ENCODE measurements at regions of chr3 and their contacts with region 1.

Region 1: GRCh38 chr3:124281453-124282316 is 289.8 kb upstream of the ROPN1 start:
- DNase-seq: no peak

Region 2: GRCh38 chr3:124078953-124079911 is 202.5 kb before region 1 on chr3:
- intact Hi-C with region 1: loop called (anchors 2 kb)
- DNase-seq: no peak

Region 3: GRCh38 chr3:124246949-124247348 is 34.7 kb before region 1 on chr3:
- intact Hi-C with region 1: loop called (anchors 1 kb)
- DNase-seq: no peak